ENCODE measurements at regions of chr12 and their contacts with region 1.

Region 1: DNA sequence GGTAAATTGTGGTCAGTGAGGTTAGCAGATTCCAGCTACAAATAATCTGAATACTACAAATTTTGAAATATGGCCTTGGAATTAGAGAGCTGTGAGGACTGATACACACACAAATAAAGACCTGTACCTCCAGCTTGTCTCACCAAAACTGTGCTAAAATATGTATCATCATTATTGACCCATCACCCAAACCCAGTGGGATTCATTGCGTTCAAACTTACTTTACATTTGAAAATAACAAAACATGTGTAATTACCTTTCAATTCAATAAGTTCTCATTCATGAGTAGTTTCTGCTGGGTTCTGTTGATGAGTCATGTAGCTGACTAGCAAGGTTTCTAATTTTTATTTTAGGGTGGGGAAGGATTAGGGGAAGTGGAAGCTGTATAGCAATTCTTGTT is 170.9 kb downstream of the MSRB3 start:
- DNase-seq: no peak
- ATAC-seq: no peak
- H3K4me3 Mint-ChIP-seq: no peak overlapping the region
- H3K27ac Mint-ChIP-seq: no peak overlapping the region
- H3K4me1 Mint-ChIP-seq: no peaks in the 10 kb centered on the region
- H3K27me3 Mint-ChIP-seq: peaks cover 5% of the 10 kb centered on the region

Region 2: DNA sequence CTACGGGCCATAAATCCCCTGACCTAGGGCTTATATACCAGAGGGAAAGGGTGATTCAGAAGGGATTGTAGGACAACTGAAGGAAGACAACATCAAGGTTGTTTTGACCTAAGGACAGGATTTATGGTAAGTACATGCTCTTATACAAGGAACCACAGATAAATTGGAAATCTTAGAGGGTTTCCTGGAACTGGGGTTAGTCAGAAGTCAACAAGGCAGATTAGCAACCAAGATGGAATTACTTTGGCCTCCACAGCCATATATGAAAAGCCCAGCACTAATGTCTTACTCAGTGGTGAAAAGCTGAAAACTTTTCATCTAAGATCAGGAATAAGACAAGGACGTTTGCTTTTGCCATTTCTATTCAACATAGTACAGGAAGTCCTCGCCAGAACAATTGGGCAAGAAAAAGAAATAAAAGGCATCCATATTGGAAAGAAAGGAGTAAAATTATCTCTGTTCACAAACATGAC is 715.0 kb after region 1 on chr12:
- CTCF ChIA-PET with region 1: no interaction called
- POLR2A ChIA-PET with region 1: no interaction called
- intact Hi-C with region 1: loop called in 1 of 2 experiments (anchors 5 kb)
- DNase-seq: no peak
- ATAC-seq: no peak
- H3K4me3 Mint-ChIP-seq: no peak overlapping the region
- H3K27ac Mint-ChIP-seq: peak overlapping the region; percentile 48
- H3K4me1 Mint-ChIP-seq: peaks cover 66% of the 10 kb centered on the region
- H3K27me3 Mint-ChIP-seq: no peaks in the 10 kb centered on the region

Measured in activated CD4-positive, alpha-beta T cell treated with anti-CD3 and anti-CD28 coated beads for 36 hours (primary cell).